Dendritic cell treated with granulocyte-macrophage colony-stimulating factor and Interleukin-4, amounts not matched to agents 40 ng/mL and 50 ng/mL, for 4 days (primary cell): ENCODE measurements at regions of chr4 and their contacts with region 1.

Region 1: GRCh38 chr4:1351854-1352633 is 5.0 kb downstream of the UVSSA start:
- H3K4me3 Mint-ChIP-seq: no peak overlapping the region
- H3K27ac Mint-ChIP-seq: no peak overlapping the region
- H3K4me1 Mint-ChIP-seq: peaks cover 32% of the 10 kb centered on the region
- H3K27me3 Mint-ChIP-seq: no peaks in the 10 kb centered on the region

Region 2: DNA sequence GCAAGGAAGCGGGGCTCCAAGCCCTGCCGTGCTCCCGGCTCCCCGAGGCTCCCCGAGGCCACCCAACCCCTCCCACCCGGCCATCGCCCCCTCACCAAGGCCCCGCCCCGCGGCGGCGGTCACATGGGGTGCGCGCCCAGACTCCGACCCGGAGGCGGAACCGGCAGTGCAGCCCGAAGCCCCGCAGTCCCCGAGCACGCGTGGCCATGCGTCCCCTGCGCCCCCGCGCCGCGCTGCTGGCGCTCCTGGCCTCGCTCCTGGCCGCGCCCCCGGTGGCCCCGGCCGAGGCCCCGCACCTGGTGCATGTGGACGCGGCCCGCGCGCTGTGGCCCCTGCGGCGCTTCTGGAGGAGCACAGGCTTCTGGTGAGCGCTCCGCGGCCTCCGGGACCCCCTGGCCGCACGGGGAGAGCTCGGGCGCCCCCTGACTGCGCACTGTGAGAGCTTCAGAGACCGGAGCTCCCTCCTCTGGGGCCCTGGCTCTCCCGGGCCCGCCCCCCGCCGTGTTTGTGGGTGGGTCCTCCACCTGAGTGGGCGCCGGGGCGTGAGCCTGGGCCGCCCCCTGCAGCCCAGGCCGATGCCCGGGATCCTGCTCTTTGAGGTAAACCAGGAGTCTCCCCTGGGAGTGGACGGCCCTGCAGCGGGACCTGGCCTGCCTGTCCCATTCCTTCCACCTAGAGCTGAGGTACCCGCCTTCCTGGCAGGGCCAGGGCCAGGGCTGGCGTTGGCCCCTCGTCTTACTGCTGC is 365.0 kb before region 1 on chr4 and contains the start of gene IDUA:
- intact Hi-C with region 1: no loop called
- H3K4me3 Mint-ChIP-seq: peak within 1 kb of the TSS; percentile 82
- H3K27ac Mint-ChIP-seq: peak within 1 kb of the TSS; percentile 83
- H3K4me1 Mint-ChIP-seq: peaks cover 36% of the 10 kb centered on the region
- H3K27me3 Mint-ChIP-seq: peaks cover 1% of the 10 kb centered on the region

Region 3: GRCh38 chr4:1318488-1319213 is 33.4 kb before region 1 on chr4:
- intact Hi-C with region 1: loop called (anchors 1 kb)
- H3K4me3 Mint-ChIP-seq: no peak overlapping the region
- H3K27ac Mint-ChIP-seq: no peak overlapping the region
- H3K4me1 Mint-ChIP-seq: no peaks in the 10 kb centered on the region
- H3K27me3 Mint-ChIP-seq: no peaks in the 10 kb centered on the region

Region 4: DNA sequence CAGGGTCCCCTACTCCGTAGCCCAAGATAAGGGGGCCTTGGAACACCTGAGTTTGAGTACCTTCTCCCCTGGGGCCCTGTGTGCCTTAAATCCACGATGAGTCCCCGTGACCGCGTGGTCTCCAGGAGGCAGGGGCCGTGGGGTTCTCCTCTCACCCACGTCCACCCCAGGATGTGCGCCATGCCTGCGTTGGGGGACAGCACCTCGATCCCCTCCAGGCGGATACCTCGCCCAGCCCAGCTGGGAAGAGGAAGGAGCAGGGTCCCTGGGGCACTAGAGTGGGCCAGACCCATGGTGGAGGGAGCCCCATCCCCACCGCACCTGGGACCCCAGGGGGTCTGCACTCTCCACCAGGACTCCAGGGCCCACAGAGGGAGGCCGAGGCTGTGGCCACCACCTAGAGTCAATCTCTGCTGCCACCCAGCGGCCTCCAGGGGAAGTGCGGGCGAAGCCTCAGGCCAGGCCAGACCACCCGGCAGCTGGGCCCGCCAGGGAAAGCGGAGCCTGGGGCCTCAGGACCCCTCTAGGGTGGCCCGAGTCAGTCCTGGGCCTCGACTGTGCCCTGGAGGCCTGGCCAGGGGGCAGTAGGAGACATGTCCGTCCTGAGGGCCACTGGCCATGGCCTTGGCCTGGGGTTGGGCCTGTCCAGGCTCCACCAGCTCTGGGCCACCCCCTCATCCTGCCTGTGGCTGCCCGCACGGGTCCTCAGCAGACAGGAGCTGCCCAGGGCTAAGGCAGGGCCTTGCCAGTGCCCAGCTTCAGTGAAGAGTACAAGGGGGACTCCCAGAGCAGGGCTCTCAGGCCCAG is 277.1 kb after region 1 on chr4:
- intact Hi-C with region 1: loop called (anchors 1 kb)
- H3K4me3 Mint-ChIP-seq: no peak overlapping the region
- H3K27ac Mint-ChIP-seq: no peak overlapping the region
- H3K4me1 Mint-ChIP-seq: no peaks in the 10 kb centered on the region
- H3K27me3 Mint-ChIP-seq: peaks cover 5% of the 10 kb centered on the region